GM12878 (cell line): ENCODE measurements at regions of chr7 and their contacts with region 1.

Region 1: DNA sequence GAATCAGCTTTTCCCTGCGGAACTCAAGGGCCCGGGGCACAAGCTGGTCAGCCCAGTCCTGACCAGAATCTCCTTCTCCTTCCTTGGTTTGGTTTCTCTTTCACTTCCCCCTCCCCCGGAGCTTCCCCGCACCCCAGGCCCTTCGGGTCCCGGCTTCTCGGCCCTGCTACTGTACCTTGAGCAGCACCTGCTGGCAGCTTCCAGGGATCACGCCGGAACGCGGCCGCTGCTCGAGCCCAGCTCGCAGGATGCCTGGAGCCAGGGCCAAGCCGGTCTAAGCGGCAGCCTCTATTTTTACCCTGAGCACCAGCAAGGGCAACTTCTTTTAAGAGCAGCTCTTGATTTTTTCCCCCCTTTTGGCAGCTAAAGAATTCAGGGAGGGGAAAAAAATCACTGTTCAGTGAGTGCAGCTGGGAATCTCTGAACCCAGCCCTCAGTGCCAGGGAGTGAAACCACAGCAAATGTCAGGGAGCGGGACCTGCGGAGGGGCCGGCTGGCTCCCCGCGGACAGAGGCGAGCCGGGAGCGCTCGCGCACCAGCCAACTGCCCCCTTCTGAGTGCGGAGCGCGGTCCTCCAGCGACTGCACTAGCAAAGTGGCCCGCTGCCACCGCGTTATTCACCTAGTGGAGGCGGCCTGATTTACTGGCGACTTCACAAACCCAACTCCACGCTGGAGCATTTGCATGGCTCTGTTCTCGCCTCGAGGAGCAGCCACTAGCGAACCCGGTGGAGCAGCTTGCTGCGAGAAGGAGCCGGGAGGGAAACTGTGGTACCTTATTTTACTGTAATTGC is 2.4 kb upstream of the INHBA start:
- DNase-seq: peak; percentile 50
- ATAC-seq: peak; percentile 98
- H3K4me3 ChIP-seq: peak overlapping the region; percentile 54; the same call in 1 of the 2 replicates
- H3K27ac ChIP-seq: no peak overlapping the region
- H3K4me1 ChIP-seq: peaks cover 11% of the 10 kb centered on the region
- H3K27me3 ChIP-seq: no peaks in the 10 kb centered on the region
- CTCF ChIP-seq: peak; percentile 68 to 88 (median 82)
- EP300 ChIP-seq: peak in 1 of 2 experiments; percentile 11; a peak in 1 of 4 replicates
- POLR2A ChIP-seq: no peak
- RAD21 ChIP-seq: peak; percentile 95

Region 2: GRCh38 chr7:39894904-39895303 is 1810.4 kb before region 1 on chr7:
- CTCF ChIA-PET with region 1: interaction called, 8 read pairs
- POLR2A ChIA-PET with region 1: no interaction called
- RAD21 ChIA-PET with region 1: interaction called, 6 read pairs
- SMC1A ChIA-PET with region 1: interaction called, 9 read pairs
- in situ Hi-C with region 1: loop called (anchors 25 kb)
- intact Hi-C with region 1: loop called (anchors 10 kb)
- DNase-seq: no peak
- ATAC-seq: no peak
- H3K4me3 ChIP-seq: no peak overlapping the region
- H3K27ac ChIP-seq: no peak overlapping the region
- H3K4me1 ChIP-seq: no peaks in the 10 kb centered on the region
- H3K27me3 ChIP-seq: peaks cover 0 to 1% of the 10 kb centered on the region in 2 experiments; a peak in 1 of 4 replicates
- CTCF ChIP-seq: no peak
- EP300 ChIP-seq: no peak
- POLR2A ChIP-seq: no peak
- RAD21 ChIP-seq: no peak

Region 3: DNA sequence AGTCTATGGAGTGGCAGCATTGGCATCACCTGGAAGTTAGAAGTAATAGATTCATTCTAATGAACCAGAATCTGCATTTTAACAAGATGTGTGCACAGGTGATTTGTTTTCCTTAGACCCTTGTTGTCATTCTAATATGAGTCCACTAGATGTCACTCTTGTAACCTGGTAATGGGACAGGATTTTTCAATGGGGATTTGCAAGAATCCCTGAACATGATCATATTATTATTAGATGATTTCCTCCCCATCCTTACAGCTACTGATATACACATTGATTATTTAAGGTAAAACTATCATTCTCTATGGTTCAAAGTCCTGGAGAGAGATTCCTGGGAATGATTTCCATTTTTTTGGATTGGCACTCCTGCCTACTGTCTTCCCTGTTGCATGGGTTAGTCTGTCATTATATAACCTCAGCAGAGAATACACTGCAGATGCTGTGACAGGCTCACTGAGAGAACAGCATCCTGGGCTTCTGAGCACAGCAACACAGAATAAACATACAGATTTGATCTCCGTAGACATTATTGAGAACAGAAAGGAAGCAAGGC is 1375.6 kb before region 1 on chr7:
- CTCF ChIA-PET with region 1: interaction called, 4 read pairs
- POLR2A ChIA-PET with region 1: no interaction called
- RAD21 ChIA-PET with region 1: interaction called, 6 read pairs
- SMC1A ChIA-PET with region 1: no interaction called
- in situ Hi-C with region 1: loop called (anchors 10 kb)
- intact Hi-C with region 1: loop called (anchors 2 kb)
- DNase-seq: no peak
- ATAC-seq: no peak
- H3K4me3 ChIP-seq: no peak overlapping the region
- H3K27ac ChIP-seq: no peak overlapping the region
- H3K4me1 ChIP-seq: no peaks in the 10 kb centered on the region
- H3K27me3 ChIP-seq: no peaks in the 10 kb centered on the region
- CTCF ChIP-seq: peak; percentile 52 to 62 (median 59); a peak in 5 of 6 replicates
- EP300 ChIP-seq: no peak
- POLR2A ChIP-seq: no peak
- RAD21 ChIP-seq: peak; percentile 83

Region 4: DNA sequence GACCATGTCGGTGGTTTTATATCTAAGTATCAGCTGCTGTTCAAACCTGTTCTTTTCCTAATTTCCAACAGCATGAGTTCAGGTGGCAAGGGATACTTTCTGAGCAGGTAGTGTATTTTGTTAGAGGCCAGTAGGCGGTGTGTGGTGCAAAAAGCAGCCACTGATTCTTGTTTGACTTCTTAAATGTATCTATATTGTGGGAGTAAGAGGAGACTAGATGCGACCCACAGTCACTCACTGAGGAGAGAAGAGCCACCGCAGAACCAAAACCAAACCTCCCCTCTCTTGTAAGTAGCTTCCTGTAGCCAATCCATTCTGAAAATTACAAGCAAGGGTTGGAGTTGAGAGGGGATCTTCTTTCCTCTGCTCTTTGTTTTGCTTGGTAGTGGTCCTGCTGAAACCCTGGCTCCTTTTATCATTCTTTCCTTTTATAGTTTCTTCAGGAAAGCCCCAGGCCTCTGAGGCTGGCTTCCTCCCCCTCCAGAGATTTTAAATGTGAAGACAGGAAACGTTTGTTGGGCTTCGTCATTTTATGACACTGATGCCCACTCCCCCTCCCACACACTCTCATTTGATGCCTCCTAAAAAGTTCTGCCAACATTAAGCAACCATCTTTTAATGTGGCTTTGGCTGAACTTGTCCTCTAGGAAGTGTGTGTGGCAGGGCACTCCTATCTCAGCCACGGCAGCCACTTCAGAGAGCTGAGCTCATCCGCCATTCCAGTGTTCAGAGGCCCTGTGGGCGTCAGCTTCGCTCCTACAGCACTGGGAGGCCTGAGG is 1004.5 kb before region 1 on chr7:
- CTCF ChIA-PET with region 1: no interaction called
- POLR2A ChIA-PET with region 1: no interaction called
- RAD21 ChIA-PET with region 1: no interaction called
- SMC1A ChIA-PET with region 1: no interaction called
- in situ Hi-C with region 1: no loop called
- intact Hi-C with region 1: loop called (anchors 5 kb)
- DNase-seq: no peak
- ATAC-seq: peak; percentile 75
- H3K4me3 ChIP-seq: no peak overlapping the region
- H3K27ac ChIP-seq: no peak overlapping the region
- H3K4me1 ChIP-seq: no peaks in the 10 kb centered on the region
- H3K27me3 ChIP-seq: no peaks in the 10 kb centered on the region
- CTCF ChIP-seq: peak in 1 of 3 experiments; percentile 16; a peak in 1 of 6 replicates
- EP300 ChIP-seq: no peak
- POLR2A ChIP-seq: no peak
- RAD21 ChIP-seq: no peak

Region 5: GRCh38 chr7:41045556-41046123 is 659.7 kb before region 1 on chr7:
- CTCF ChIA-PET with region 1: interaction called, 22 read pairs
- POLR2A ChIA-PET with region 1: no interaction called
- RAD21 ChIA-PET with region 1: interaction called, 9 read pairs
- SMC1A ChIA-PET with region 1: interaction called, 7 read pairs
- in situ Hi-C with region 1: no loop called
- intact Hi-C with region 1: no loop called
- DNase-seq: no peak
- ATAC-seq: peak; percentile 77
- H3K4me3 ChIP-seq: no peak overlapping the region
- H3K27ac ChIP-seq: no peak overlapping the region
- H3K4me1 ChIP-seq: no peaks in the 10 kb centered on the region
- H3K27me3 ChIP-seq: no peaks in the 10 kb centered on the region
- CTCF ChIP-seq: peak in 2 of 3 experiments; percentile 11 to 53; a peak in 3 of 6 replicates
- EP300 ChIP-seq: no peak
- POLR2A ChIP-seq: no peak
- RAD21 ChIP-seq: peak; percentile 73

Region 6: DNA sequence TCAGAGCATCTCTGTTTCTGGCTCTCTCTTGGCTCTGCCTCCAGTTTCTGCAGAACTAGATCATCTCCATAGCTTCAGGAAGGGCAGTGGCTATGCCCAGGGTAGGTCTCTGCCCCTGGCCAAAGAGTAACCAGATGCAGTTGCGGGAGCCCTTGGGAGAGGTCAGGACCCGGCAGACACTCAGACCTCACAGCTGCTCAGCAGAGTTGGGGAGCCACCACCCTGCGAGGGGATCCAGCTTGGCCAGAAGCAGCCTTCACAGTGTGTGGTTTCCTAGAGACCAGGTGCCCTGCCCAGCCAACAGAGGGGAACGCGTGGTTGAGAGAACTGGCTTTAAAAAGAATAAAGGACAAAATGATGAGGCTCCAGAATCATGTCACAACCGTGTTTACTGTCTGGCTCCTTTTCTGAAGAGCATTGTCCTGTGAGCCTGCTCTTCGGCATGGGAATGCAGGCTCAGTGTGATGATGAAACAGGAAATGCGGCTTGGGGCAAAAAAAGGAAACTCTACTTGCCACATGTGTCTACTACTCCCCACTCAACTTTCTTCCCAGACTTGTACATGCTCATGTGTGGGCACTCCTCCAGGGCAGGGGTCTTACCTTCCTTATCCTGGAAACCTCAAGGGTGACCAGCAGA is 245.6 kb before region 1 on chr7:
- CTCF ChIA-PET with region 1: no interaction called
- POLR2A ChIA-PET with region 1: no interaction called
- RAD21 ChIA-PET with region 1: no interaction called
- SMC1A ChIA-PET with region 1: no interaction called
- in situ Hi-C with region 1: no loop called
- intact Hi-C with region 1: no loop called
- DNase-seq: no peak
- ATAC-seq: peak; percentile 31; the same call in 2 of the 3 replicates
- H3K4me3 ChIP-seq: no peak overlapping the region
- H3K27ac ChIP-seq: no peak overlapping the region
- H3K4me1 ChIP-seq: no peaks in the 10 kb centered on the region
- H3K27me3 ChIP-seq: no peaks in the 10 kb centered on the region
- CTCF ChIP-seq: no peak
- EP300 ChIP-seq: no peak
- POLR2A ChIP-seq: no peak
- RAD21 ChIP-seq: no peak

Region 7: GRCh38 chr7:41984888-41985287 is 279.6 kb after region 1 on chr7:
- CTCF ChIA-PET with region 1: no interaction called
- POLR2A ChIA-PET with region 1: no interaction called
- RAD21 ChIA-PET with region 1: no interaction called
- SMC1A ChIA-PET with region 1: no interaction called
- in situ Hi-C with region 1: no loop called
- intact Hi-C with region 1: no loop called
- DNase-seq: no peak
- ATAC-seq: no peak
- H3K4me3 ChIP-seq: no peak overlapping the region
- H3K27ac ChIP-seq: no peak overlapping the region
- H3K4me1 ChIP-seq: no peaks in the 10 kb centered on the region
- H3K27me3 ChIP-seq: no peaks in the 10 kb centered on the region
- CTCF ChIP-seq: no peak
- EP300 ChIP-seq: no peak
- POLR2A ChIP-seq: no peak
- RAD21 ChIP-seq: no peak